ENCODE measurements at regions of chr22 and their contacts with region 1.

Region 1: GRCh38 chr22:32660292-32660691 is 141.2 kb upstream of the TIMP3 start:
- DNase-seq: peak; percentile 80
- ATAC-seq: peak; percentile 61

Region 2: DNA sequence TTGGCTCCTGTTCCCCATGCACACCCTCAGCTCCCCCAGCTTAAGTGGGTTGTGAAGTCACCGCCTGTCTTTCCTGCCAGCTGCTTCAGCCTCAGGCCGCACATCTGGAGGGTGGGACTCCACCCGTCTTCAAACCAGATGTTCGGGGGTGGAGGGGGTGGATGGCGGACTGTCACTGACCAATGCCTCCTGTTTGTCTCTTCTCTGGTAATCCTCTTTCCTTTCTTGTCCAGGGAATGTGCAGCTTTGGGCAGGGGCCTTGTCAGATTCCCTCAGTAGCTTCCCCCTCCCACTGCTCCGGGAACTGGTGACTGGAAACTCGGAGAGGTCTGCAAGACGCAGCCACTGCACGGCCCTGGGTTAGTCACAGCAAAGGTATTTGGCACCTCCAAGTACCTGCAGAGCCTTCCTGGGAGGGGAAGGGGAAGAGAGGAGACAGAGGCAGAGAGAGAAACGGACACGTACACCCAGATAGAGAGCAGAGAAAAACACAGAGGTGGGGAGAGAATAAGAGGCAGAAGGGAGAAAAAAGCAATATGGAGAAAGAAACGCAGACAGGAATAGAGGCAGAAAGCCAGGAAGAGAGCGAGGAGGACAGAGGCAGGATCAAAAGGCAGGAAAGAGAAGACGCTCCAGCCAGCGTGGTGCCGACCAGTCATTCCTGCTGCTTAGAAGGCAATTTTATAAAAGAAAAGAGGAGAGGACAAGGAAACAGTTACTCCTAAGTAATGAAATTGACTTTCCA is 85.1 kb after region 1 on chr22:
- intact Hi-C with region 1: loop called (anchors 5 kb)
- DNase-seq: peak; percentile 81
- ATAC-seq: peak; percentile 84

Region 3: GRCh38 chr22:32796865-32797573 is 136.7 kb after region 1 on chr22:
- intact Hi-C with region 1: loop called (anchors 1 kb)
- DNase-seq: peak; percentile 87
- ATAC-seq: peak; percentile 59

Region 4: GRCh38 chr22:32985899-32986765 is 325.8 kb after region 1 on chr22:
- intact Hi-C with region 1: loop called (anchors 5 kb)
- DNase-seq: no peak
- ATAC-seq: peak; percentile 96

Region 5: GRCh38 chr22:33000342-33001280 is 340.3 kb after region 1 on chr22:
- intact Hi-C with region 1: loop called (anchors 5 kb)
- DNase-seq: peak; percentile 78
- ATAC-seq: peak; percentile 77

Measured in Right ventricle myocardium inferior (tissue), 1 donor.